ENCODE measurements at regions of chr1 and their contacts with region 1.

Region 1: DNA sequence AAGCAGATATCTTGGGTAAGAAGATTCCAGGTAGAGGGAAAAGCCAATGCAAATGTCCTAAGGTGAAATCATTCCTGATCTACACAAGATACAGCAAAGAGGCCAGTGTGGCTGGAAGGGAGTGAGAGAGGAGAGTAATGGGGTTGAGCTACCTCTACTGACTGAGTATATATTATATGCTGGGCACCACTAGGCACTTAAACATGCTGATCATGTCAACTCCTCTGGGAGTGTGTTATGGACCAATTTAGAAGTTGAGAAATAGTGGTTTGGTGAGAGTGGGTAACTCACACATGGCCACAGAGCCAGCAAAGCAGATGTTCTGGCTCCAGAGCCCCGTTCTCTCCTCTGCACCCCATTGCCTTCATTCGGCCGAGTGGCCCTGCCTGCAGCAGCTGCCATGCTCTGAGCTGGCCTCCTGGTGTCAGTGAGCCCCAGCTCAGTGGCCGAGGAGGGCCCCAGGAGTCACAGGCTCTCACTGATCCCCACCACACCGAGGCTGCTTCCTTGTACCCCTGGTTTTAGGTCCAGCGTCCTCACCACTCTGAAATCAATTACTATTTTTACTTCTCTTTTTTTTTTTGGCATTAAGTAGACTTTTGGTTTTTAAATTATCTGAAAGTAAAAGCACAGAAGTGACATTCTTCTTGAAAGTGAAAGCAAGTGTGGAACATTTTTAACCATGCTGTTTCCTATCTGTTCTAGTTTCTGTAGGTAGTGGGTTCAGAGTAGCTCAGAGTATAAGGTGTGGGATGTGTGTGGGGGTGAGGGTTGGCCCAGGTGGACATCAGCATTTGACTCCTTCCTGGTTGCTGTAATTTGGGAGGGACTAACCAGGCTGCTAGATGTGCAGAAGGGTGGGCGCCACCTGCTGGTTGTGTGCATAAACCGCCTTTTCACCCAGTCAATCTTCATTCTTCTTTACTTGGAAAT is 45.8 kb upstream of the CRNN start:
- DNase-seq: peak; percentile 80
- H3K4me3 Mint-ChIP-seq: peak overlapping the region; percentile 57
- H3K27ac Mint-ChIP-seq: peak overlapping the region; percentile 73
- H3K4me1 Mint-ChIP-seq: peaks cover 31% of the 10 kb centered on the region
- H3K27me3 Mint-ChIP-seq: no peaks in the 10 kb centered on the region

Region 2: GRCh38 chr1:152141974-152142584 is 317.8 kb before region 1 on chr1:
- CTCF ChIA-PET with region 1: interaction called, 3 read pairs
- intact Hi-C with region 1: loop called (anchors 1 kb)
- DNase-seq: peak; percentile 62
- H3K4me3 Mint-ChIP-seq: no peak overlapping the region
- H3K27ac Mint-ChIP-seq: no peak overlapping the region
- H3K4me1 Mint-ChIP-seq: peaks cover 9% of the 10 kb centered on the region
- H3K27me3 Mint-ChIP-seq: peaks cover 50% of the 10 kb centered on the region

Region 3: GRCh38 chr1:152198982-152199381 is 260.9 kb before region 1 on chr1:
- CTCF ChIA-PET with region 1: interaction called, 10 read pairs
- intact Hi-C with region 1: no loop called
- DNase-seq: no peak
- H3K4me3 Mint-ChIP-seq: no peak overlapping the region
- H3K27ac Mint-ChIP-seq: no peak overlapping the region
- H3K4me1 Mint-ChIP-seq: no peaks in the 10 kb centered on the region
- H3K27me3 Mint-ChIP-seq: peaks cover 11% of the 10 kb centered on the region

Region 4: DNA sequence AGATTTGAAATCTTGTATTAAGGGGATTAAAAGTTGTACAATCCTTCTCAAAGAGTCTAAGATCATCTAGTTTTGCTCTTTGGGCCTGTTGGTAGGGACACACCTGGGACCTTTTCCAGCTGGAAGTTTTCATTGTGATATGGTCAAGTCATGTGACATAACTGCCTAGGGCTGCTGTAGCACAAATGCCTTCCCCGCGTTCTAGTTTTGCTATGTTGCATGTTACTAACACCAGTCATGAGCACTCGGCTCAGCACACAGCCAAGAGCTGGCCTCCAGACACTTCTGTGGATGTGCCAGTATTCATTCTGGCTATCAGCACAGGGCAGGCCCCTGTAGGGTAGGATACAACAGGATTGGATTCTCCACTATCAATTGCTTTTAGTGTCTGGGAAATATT is 85.4 kb before region 1 on chr1:
- CTCF ChIA-PET with region 1: interaction called, 11 read pairs
- intact Hi-C with region 1: no loop called
- DNase-seq: no peak
- H3K4me3 Mint-ChIP-seq: no peak overlapping the region
- H3K27ac Mint-ChIP-seq: no peak overlapping the region
- H3K4me1 Mint-ChIP-seq: no peaks in the 10 kb centered on the region
- H3K27me3 Mint-ChIP-seq: peaks cover 3% of the 10 kb centered on the region

Region 5: GRCh38 chr1:152410599-152410998 is 49.3 kb before region 1 on chr1:
- CTCF ChIA-PET with region 1: interaction called, 19 read pairs
- intact Hi-C with region 1: no loop called
- DNase-seq: no peak
- H3K4me3 Mint-ChIP-seq: no peak overlapping the region
- H3K27ac Mint-ChIP-seq: no peak overlapping the region
- H3K4me1 Mint-ChIP-seq: no peaks in the 10 kb centered on the region
- H3K27me3 Mint-ChIP-seq: peaks cover 3% of the 10 kb centered on the region

Region 6: GRCh38 chr1:152448095-152448494 is 11.8 kb before region 1 on chr1:
- CTCF ChIA-PET with region 1: interaction called, 39 read pairs
- intact Hi-C with region 1: no loop called
- DNase-seq: no peak
- H3K4me3 Mint-ChIP-seq: no peak overlapping the region
- H3K27ac Mint-ChIP-seq: no peak overlapping the region
- H3K4me1 Mint-ChIP-seq: no peaks in the 10 kb centered on the region
- H3K27me3 Mint-ChIP-seq: no peaks in the 10 kb centered on the region

Region 7: DNA sequence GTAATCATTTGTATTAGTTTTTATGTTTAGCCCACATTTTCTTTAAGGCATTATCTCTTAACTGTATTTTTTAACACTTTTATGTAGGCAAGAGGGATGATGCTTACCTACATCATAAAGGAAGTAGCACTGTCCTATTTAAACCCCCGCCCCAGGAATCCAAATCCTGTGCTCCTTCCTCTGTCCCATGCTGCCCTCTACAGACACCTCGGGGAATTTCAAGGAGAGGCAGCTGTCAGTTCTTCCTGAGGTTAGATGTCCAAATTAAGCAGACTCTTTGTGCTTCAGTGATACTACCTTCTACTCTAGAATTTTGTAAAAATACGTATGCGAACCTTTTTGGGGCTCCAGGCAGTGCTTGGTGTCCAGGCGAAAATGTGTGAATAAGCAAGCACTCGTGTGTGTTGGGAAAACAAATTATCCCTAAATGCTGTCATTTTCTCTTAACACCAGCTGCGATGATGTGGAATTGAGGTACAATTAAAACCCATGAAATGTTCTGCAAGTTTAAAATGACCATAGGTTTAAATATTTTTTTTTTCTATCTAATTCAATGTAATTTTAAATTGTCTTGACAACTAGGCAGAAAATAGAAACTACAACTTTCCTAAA is 73.6 kb after region 1 on chr1:
- CTCF ChIA-PET with region 1: interaction called, 6 read pairs
- intact Hi-C with region 1: loop called (anchors 2 kb)
- DNase-seq: peak; percentile 66
- H3K4me3 Mint-ChIP-seq: no peak overlapping the region
- H3K27ac Mint-ChIP-seq: no peak overlapping the region
- H3K4me1 Mint-ChIP-seq: no peaks in the 10 kb centered on the region
- H3K27me3 Mint-ChIP-seq: peaks cover 35% of the 10 kb centered on the region